Dorsolateral prefrontal cortex (tissue), 120 donors: ENCODE measurements at regions of chr19 and their contacts with region 1.

Region 1: DNA sequence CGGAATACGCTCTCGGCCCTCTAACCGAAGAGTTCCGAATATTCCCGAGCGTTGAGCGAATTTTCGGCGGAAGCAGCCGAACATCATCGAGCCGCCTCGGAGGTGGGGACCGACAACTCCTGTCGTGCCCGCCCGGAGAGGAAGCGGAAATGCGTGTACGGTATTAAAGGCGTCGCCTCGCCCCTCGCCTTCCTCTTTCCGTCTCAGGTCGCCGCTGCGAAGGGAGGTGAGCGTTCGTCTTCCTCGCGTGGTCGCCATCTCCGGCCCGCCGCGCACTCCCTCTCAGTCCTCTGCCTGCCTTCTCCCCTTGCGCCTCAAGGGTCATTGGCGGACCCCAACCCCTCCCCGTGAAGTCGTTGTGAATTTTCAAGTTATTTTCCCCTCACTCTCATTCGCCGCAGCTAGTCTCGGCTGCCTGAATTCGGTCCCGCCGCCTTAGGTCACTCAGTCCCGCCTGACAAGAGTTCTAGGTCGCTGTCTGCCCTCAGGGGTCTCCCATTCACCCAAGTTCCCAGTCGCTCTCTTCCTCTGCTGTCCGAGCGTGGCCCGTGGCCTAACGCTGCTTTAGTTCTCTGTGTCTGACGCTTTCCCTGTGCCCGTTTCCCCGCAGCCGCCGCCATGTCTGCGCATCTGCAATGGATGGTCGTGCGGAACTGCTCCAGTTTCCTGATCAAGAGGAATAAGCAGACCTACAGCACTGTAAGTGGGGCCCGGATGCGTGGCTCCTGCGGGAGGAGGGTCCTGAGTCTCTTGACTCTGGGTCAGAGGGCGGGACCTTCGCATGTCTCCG is at the start of gene RPL28:
- DNase-seq: peak; percentile 98 to 99 (median 98)
- H3K4me3 ChIP-seq: peak within 1 kb of the TSS; percentile 66 to 99 (median 91)
- H3K27ac ChIP-seq: peak within 1 kb of the TSS; percentile 78 to 100 (median 97)
- H3K27me3 ChIP-seq: no peaks in the 10 kb centered on the region
- CTCF ChIP-seq: peak in 16 of 56 donors; percentile 4 to 35 (median 22)
- total RNA-seq, gene RPL28: 315 to 923 (median 541) TPM

Region 2: GRCh38 chr19:55178781-55179599 is 206.9 kb before region 1 on chr19:
- intact Hi-C with region 1: no loop called
- DNase-seq: peak; percentile 79 to 95 (median 90)
- H3K4me3 ChIP-seq: peak overlapping the region; percentile 49 to 81 (median 68)
- H3K27ac ChIP-seq: peak overlapping the region in 51 of 59 donors; percentile 0 to 90 (median 66)
- H3K27me3 ChIP-seq: peaks cover 0 to 60% (median 23%) of the 10 kb centered on the region in 45 donors
- CTCF ChIP-seq: no peak

Region 3: DNA sequence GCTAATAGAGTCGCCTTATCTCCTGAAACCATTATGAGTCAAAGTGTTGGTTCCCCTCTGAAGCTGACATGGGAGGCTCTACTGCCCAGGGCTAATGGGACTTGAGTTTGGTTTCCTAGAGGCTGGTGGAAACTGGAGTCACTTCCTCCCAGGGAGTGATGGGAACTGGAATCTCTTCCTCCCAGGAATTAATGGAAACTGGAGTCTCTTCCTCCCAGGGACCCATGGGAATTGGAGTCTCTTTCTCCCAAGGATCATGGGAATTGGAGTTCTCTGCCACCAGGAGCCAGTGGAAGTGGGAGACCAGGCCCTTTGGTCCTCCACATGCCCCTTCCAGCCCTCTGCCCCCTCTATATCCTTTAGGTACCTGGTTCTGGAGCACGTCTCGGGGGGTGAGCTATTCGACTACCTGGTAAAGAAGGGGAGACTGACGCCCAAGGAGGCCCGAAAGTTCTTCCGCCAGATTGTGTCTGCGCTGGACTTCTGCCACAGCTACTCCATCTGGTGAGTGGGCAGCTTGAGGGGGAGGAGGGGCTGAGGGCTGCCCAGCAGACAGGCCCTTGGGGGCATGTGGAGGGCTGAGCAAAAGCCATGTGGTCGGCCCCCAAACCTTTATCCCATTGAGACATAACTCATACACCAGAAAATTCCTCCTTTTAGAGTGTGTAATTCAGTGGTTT is 96.7 kb before region 1 on chr19:
- intact Hi-C with region 1: loop called in 1 of 2 experiments (anchors 2 kb)
- DNase-seq: no peak
- H3K4me3 ChIP-seq: peak overlapping the region in 10 of 59 donors; percentile 6 to 78 (median 42)
- H3K27ac ChIP-seq: peak overlapping the region in 57 of 59 donors; percentile 72 to 100 (median 96)
- H3K27me3 ChIP-seq: no peaks in the 10 kb centered on the region
- CTCF ChIP-seq: no peak

Region 4: DNA sequence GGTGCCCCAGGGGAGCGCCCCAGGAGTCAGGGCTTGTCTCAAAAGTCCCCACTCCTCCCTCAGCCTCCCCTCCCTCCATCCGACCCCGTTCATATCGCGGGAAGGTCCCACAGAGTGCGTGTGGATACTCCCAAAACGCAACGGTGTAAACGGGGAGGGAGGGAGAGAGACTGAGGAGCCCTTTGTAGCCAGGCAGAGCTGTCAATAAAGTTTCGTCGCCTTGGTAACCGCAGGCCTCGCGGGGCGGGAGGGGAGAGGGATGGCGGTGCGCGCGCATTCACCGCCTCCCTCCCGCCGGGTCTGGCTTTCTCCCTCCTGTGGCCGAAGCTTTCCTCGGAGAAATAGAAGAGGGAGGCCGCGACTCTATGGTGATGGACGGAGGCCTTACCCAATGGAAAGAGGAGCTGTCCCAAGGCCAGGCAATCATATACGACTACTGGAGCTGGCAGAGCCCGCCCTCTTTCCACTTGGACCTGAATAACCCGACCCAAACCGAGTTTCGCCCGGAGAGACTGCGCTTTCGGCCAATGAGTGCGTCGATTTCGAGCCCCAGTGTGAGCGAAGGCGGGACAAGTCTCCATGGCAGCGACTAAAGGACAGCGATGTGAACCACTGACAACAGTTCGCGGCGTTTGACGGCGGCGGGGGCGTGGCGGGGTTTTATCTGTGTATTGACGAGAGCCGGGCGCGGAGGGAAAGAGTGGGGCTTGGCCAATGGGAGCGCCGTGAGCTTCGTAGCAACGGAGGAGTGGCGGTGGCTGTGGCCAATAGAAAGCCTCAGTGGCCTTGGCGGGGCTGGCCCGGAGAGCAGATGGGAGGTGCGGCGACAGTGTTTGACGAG is 46.7 kb before region 1 on chr19 and contains the start of gene KMT5C:
- intact Hi-C with region 1: loop called in 1 of 2 experiments (anchors 2 kb)
- DNase-seq: peak; percentile 100
- H3K4me3 ChIP-seq: peak within 1 kb of the TSS; percentile 53 to 84 (median 74)
- H3K27ac ChIP-seq: peak within 1 kb of the TSS; percentile 80 to 99 (median 95)
- H3K27me3 ChIP-seq: no peaks in the 10 kb centered on the region
- CTCF ChIP-seq: peak in 42 of 56 donors; percentile 0 to 58 (median 36)
- total RNA-seq, gene KMT5C: 9.5 to 44.0 (median 20.0) TPM

Region 5: DNA sequence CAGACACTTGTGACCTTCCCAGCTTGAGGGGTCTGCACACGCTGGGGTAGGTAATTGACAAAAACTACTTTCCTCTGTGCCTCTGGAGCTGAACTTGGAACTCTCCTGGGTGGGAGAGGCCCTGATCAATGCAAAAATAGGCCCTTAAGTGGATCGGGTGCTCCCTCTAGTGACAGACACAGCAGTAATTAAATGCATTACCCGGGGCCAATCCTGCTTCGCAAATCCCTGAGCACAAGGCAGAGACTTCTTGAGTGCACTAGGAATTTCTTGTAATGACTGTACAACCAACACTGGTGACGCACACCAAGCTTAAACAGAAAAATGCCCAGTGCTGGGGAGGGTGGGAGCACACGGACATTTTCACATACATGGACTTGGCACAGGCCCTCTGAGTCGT is 32.2 kb after region 1 on chr19:
- intact Hi-C with region 1: loop called in 1 of 2 experiments (anchors 5 kb)
- DNase-seq: peak in 7 of 10 donors; percentile 29 to 73 (median 58)
- H3K4me3 ChIP-seq: no peak overlapping the region
- H3K27ac ChIP-seq: peak overlapping the region in 37 of 59 donors; percentile 1 to 100 (median 85)
- H3K27me3 ChIP-seq: peaks cover 0 to 3% (median 0%) of the 10 kb centered on the region in 45 donors
- CTCF ChIP-seq: peak; percentile 32 to 87 (median 73)

Region 6: GRCh38 chr19:55461259-55461973 is 75.5 kb after region 1 on chr19 and contains the start of gene ISOC2:
- intact Hi-C with region 1: loop called in 1 of 2 experiments (anchors 2 kb)
- DNase-seq: peak; percentile 100
- H3K4me3 ChIP-seq: peak within 1 kb of the TSS; percentile 61 to 100 (median 93)
- H3K27ac ChIP-seq: peak within 1 kb of the TSS; percentile 46 to 91 (median 84)
- H3K27me3 ChIP-seq: no peaks in the 10 kb centered on the region
- CTCF ChIP-seq: peak in 29 of 56 donors; percentile 11 to 62 (median 31)
- total RNA-seq, gene ISOC2: 25.1 to 48.5 (median 36.7) TPM